BJ (cell line): ENCODE measurements at regions of chr5 and their contacts with region 1.

Region 1: GRCh38 chr5:150161242-150162141 is 5.1 kb upstream of the CDX1 start:
- DNase-seq: no peak
- H3K4me3 ChIP-seq: no peak overlapping the region
- H3K27me3 ChIP-seq: no peaks in the 10 kb centered on the region
- CTCF ChIP-seq: peak; percentile 99

Region 2: GRCh38 chr5:150129813-150130492 is 31.5 kb before region 1 on chr5:
- CTCF ChIA-PET with region 1: interaction called, 12 read pairs
- POLR2A ChIA-PET with region 1: no interaction called
- DNase-seq: no peak
- H3K4me3 ChIP-seq: no peak overlapping the region
- H3K27me3 ChIP-seq: no peaks in the 10 kb centered on the region
- CTCF ChIP-seq: peak; percentile 94

Region 3: GRCh38 chr5:150175076-150175935 is 13.8 kb after region 1 on chr5:
- CTCF ChIA-PET with region 1: interaction called, 38 read pairs
- POLR2A ChIA-PET with region 1: no interaction called
- DNase-seq: no peak
- H3K4me3 ChIP-seq: no peak overlapping the region
- H3K27me3 ChIP-seq: 0 out of 2 replicates have a peak, but pooled peaks cover 2% of the 10 kb centered on the region
- CTCF ChIP-seq: peak; percentile 68

Region 4: DNA sequence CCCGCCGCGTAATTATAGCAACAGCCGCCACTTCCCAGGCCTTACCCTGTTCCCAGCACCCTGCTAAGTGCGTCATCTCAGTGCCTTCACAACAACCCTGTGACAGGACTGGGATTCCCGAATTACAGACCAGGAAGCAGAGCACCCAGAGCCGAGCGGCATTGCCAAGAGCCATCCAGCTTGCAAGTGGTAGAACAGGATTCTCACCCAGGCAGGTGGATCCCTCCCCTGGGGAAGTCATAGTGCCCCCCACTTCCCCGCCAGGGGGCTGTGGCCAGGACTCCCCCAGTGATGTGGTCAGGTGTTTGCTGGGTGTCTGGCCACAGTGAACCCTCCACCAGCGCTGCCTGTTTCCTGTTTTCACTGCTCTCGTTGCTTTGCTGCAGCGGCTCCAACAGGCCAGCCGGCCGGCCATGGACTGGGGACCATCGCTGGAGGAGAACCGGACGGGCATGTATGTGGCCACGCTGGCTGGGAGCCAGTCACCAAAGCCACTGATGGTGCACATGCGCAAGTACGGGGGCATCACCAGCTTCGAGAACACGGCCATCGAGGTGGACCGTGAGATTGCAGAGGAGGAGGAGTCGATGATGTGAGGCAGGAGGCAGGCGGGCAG is 47.6 kb after region 1 on chr5:
- CTCF ChIA-PET with region 1: interaction called, 15 read pairs
- POLR2A ChIA-PET with region 1: no interaction called
- DNase-seq: no peak
- H3K4me3 ChIP-seq: no peak overlapping the region
- H3K27me3 ChIP-seq: no peaks in the 10 kb centered on the region
- CTCF ChIP-seq: no peak

Region 5: GRCh38 chr5:150217873-150218692 is 56.6 kb after region 1 on chr5:
- CTCF ChIA-PET with region 1: interaction called, 15 read pairs
- POLR2A ChIA-PET with region 1: no interaction called
- DNase-seq: no peak
- H3K4me3 ChIP-seq: no peak overlapping the region
- H3K27me3 ChIP-seq: peaks cover 1% of the 10 kb centered on the region; the same call in 1 of the 2 replicates
- CTCF ChIP-seq: peak; percentile 77

Region 6: DNA sequence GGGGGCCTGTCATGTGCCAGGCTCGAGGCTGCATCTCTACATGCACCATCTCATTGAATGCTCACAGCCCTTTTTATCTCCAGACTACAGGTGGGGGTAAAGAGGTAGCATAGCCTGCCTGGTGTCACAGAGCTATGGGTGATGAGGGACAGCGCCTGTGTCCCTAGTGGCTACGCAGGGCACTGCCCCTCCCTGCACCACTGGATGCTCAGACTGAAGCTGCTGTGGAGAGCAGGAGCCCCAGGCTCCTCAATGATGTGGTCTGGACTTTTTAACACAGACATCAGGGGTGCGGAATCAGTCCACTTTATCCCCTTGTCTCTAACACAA is 125.4 kb after region 1 on chr5:
- CTCF ChIA-PET with region 1: no interaction called
- POLR2A ChIA-PET with region 1: no interaction called
- DNase-seq: no peak
- H3K4me3 ChIP-seq: no peak overlapping the region
- H3K27me3 ChIP-seq: peaks cover 4% of the 10 kb centered on the region
- CTCF ChIP-seq: no peak